A549 (cell line): ENCODE measurements at regions of chr11 and their contacts with region 1.

Region 1: DNA sequence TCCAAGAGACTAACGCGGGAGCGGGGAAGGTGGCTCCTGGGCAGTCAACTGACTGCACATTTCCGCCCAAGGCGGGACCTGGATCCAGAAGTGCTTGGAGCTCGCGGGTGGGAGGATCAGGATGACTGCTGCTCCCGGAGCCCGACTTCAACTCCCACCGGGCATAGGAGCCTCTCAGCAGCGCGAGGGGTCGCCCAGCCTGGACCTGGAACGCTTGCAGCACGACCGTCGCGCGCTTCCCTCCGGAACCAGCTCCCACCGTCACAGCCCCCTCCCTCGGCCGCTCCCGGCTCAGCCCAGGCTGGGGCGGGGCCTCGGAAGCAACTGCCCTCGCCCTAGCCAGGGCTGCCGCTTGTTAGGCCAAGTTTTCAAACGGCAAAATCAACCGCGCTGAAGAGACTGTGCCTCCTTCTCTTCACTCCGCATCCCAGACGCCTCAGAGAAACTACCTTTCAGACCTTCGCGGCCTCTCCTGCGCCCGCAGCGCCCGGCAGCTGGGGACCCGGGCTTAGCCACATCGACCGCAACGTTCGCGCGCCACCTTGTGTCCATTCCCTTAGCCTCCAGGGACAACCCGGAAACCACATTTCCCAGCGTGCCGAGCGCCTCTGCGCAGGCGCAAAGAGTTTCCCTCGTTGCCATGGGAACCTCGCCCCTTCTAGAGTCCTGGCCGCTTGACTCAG is 14.0 kb downstream of the SSH3 start:
- DNase-seq: peak; percentile 94 to 99
- ATAC-seq: peak; percentile 88 to 90
- H3K4me3 ChIP-seq: peak overlapping the region; percentile 69
- H3K27ac ChIP-seq: peak overlapping the region; percentile 91 to 95
- H3K4me1 ChIP-seq: peaks cover 12% of the 10 kb centered on the region
- CTCF ChIP-seq: peak; percentile 97
- EP300 ChIP-seq: no peak
- POLR2A ChIP-seq: peak; percentile 88
- RAD21 ChIP-seq: peak; percentile 92 to 98

Region 2: DNA sequence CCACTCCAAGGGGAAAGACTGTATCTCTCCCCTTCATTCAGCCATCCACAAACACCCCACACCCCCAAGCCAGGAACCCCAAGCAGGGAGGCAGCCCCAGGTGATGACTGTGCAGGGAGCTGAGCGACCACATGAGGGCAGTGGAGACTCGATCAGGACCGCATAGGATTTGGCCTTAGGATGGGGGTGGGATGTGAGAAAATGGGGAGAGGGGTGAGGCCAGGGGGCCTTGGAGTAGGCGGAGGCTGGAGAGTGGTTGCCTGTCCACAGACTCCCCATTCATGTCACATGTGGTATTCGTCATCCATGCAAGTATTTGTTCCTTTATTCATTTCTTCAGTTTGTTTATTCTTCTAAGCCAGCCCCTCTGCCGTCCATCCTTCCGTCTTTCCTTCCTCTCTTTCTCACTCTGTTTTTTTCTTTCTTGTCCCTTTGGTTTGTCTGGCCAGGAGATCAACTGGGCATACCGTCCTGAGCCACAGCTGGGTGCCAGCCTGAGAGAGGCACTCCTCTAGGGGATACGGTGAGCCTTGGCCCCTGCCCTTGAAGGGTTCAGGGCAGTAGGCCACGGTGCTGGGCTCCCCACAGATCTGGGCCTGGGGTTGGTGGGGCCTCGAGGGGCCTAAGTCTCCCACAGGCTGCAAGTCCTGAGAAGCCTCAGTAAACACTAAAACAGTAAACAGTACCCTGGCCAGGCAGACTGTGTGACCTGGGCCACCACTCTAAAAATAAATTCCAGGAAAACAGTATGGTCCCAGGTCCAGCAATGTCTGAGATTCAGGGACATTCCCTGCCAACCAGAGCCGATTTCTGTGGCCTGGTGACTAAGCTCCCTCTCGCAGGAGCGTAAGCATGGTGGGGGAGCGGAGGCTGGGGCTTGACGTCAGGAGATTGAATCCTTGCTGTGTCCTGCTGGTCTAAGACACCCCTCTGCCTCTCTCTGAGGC is 263.2 kb before region 1 on chr11:
- CTCF ChIA-PET with region 1: interaction called, 16 read pairs
- POLR2A ChIA-PET with region 1: interaction called, 3 read pairs
- DNase-seq: peak; percentile 80 to 98
- ATAC-seq: peak; percentile 64 to 82
- H3K4me3 ChIP-seq: no peak overlapping the region
- H3K27ac ChIP-seq: peak overlapping the region; percentile 75 to 91
- H3K4me1 ChIP-seq: peaks cover 44% of the 10 kb centered on the region
- CTCF ChIP-seq: peak; percentile 81
- EP300 ChIP-seq: no peak
- POLR2A ChIP-seq: no peak
- RAD21 ChIP-seq: peak; percentile 84 to 85

Region 3: DNA sequence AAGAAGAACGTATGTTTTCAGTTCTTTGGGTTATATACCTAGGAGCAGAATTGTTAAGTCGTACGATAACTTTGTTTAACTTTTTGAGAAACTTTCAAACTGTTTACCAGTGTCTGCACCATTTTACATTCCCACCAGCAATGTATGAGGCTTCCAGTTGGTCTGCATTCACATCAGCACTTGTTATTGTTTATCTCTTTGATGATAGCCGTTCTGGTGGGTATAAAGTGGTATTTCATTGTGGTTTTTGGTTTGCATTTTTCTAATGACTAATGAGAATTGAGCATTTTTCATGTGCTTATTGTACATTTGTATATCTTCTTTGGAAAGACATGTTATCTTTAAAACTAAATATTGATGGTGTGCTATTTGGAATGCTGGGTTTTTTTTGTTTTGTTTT is 138.5 kb before region 1 on chr11:
- CTCF ChIA-PET with region 1: no interaction called
- POLR2A ChIA-PET with region 1: no interaction called
- DNase-seq: no peak
- ATAC-seq: no peak
- H3K4me3 ChIP-seq: no peak overlapping the region
- H3K27ac ChIP-seq: no peak overlapping the region
- H3K4me1 ChIP-seq: peaks cover 9% of the 10 kb centered on the region; the same call in 2 of the 3 replicates
- CTCF ChIP-seq: no peak
- EP300 ChIP-seq: no peak
- POLR2A ChIP-seq: no peak
- RAD21 ChIP-seq: no peak

Region 4: DNA sequence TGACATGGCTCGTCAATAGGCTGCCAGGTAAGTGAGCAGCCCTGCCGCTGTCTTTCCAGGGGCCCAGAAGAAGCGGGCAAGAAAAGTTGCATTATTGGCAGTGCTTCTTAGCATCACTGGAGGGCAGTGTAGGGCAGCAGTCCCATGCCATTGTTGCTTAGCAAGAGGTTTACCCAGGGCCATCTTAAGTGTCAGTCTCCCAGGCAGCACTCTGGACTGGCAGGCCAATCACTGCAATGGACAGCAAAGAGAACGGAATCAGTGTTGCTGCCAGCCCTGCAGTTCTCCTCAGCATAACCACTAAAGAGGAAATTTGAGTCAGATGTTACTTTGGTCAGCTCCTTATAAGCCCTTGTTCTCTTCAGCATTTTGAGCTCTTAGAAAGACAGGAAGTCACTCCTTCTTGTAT is 64.5 kb before region 1 on chr11:
- CTCF ChIA-PET with region 1: interaction called, 22 read pairs
- POLR2A ChIA-PET with region 1: no interaction called
- DNase-seq: peak; percentile 49 to 80
- ATAC-seq: peak; percentile 75 to 82
- H3K4me3 ChIP-seq: no peak overlapping the region
- H3K27ac ChIP-seq: no peak overlapping the region
- H3K4me1 ChIP-seq: no peaks in the 10 kb centered on the region
- CTCF ChIP-seq: peak; percentile 40
- EP300 ChIP-seq: no peak
- POLR2A ChIP-seq: no peak
- RAD21 ChIP-seq: peak; percentile 37 to 50; a peak in 4 of 5 replicates

Region 5: DNA sequence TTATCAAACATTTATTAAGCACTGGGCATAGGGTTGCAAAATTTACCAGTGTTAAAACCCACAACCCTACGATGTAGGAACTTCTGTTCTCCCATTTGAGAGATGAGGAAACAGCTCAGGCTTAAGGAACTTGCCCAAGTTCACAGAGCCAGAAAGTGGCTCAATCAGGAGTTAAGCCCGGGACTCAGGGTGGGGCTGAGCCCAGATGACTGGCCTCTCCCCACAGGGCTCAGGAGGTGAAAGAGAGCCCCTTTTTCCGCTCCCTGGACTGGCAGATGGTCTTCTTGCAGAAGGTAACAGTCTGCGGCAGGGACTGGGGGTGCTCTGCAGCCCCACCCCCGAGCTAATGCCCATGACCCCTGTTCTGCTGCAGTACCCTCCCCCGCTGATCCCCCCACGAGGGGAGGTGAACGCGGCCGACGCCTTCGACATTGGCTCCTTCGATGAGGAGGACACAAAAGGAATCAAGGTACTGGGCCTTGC is 33.8 kb before region 1 on chr11:
- CTCF ChIA-PET with region 1: interaction called, 20 read pairs
- POLR2A ChIA-PET with region 1: interaction called, 4 read pairs
- DNase-seq: no peak
- ATAC-seq: no peak
- H3K4me3 ChIP-seq: no peak overlapping the region
- H3K27ac ChIP-seq: no peak overlapping the region
- H3K4me1 ChIP-seq: peaks cover 10% of the 10 kb centered on the region; the same call in 2 of the 3 replicates
- CTCF ChIP-seq: no peak
- EP300 ChIP-seq: no peak
- POLR2A ChIP-seq: no peak
- RAD21 ChIP-seq: no peak

Region 6: GRCh38 chr11:67332081-67332691 is 14.8 kb after region 1 on chr11:
- CTCF ChIA-PET with region 1: interaction called, 28 read pairs
- POLR2A ChIA-PET with region 1: interaction called, 4 read pairs
- DNase-seq: no peak
- ATAC-seq: no peak
- H3K4me3 ChIP-seq: no peak overlapping the region
- H3K27ac ChIP-seq: no peak overlapping the region
- H3K4me1 ChIP-seq: no peaks in the 10 kb centered on the region
- CTCF ChIP-seq: no peak
- EP300 ChIP-seq: no peak
- POLR2A ChIP-seq: no peak
- RAD21 ChIP-seq: no peak

Region 7: GRCh38 chr11:67353317-67354074 is 36.1 kb after region 1 on chr11 and contains the start of gene POLD4:
- CTCF ChIA-PET with region 1: interaction called, 31 read pairs
- POLR2A ChIA-PET with region 1: interaction called, 4 read pairs
- DNase-seq: peak; percentile 95 to 97
- ATAC-seq: peak; percentile 46 to 74
- H3K4me3 ChIP-seq: peak within 1 kb of the TSS; percentile 69
- H3K27ac ChIP-seq: peak within 1 kb of the TSS; percentile 93 to 98
- H3K4me1 ChIP-seq: peaks cover 87% of the 10 kb centered on the region
- CTCF ChIP-seq: no peak
- EP300 ChIP-seq: no peak
- POLR2A ChIP-seq: peak; percentile 30; the same call in 1 of the 2 replicates
- RAD21 ChIP-seq: no peak
- polyA plus RNA-seq, gene POLD4: 140 and 157 TPM in 2 replicates

Region 8: GRCh38 chr11:67470337-67471007 is 153.1 kb after region 1 on chr11:
- CTCF ChIA-PET with region 1: no interaction called
- POLR2A ChIA-PET with region 1: no interaction called
- DNase-seq: no peak
- ATAC-seq: no peak
- H3K4me3 ChIP-seq: no peak overlapping the region
- H3K27ac ChIP-seq: no peak overlapping the region
- H3K4me1 ChIP-seq: peaks cover 22% of the 10 kb centered on the region
- CTCF ChIP-seq: no peak
- EP300 ChIP-seq: no peak
- POLR2A ChIP-seq: no peak
- RAD21 ChIP-seq: no peak

Region 9: DNA sequence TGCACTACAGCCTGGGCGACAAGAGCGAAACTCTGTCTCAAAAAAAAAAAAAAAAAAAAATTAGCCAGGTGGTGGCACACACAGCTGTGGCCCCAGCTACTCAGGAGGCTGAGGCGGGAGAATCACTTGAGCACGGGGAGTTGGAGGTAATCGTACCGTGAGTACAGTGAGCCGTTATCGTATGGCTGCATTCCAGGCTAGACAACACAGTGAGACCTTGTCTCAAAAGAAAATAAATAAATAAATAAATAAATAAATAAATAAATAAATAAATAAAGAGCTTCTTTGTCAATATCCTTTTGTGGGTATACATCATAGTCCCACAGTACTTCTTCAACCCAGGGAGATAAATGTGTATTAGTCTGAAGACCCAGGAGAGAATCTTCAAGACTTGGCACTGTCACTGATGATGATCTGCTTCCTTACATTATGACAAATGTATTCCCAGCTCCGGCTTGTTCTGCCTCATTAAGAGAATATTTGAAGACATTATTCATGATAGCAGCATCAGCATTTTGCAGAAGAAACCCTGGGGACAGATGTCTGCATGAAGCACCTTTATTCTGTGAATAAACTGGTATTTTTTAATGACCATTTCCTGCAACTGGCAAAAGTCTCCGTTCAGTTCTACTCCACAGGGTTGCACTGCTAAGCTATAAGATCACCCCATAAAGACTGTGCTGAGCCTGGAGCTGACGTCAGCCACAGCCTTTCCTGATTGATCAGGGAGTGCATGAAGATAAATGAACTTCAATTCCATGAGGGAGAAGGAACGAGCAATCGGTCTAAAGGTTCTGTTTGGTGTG is 334.8 kb after region 1 on chr11:
- CTCF ChIA-PET with region 1: no interaction called
- POLR2A ChIA-PET with region 1: no interaction called
- DNase-seq: no peak
- ATAC-seq: no peak
- H3K4me3 ChIP-seq: no peak overlapping the region
- H3K27ac ChIP-seq: no peak overlapping the region
- H3K4me1 ChIP-seq: peaks cover 8% of the 10 kb centered on the region; the same call in 2 of the 3 replicates
- CTCF ChIP-seq: no peak
- EP300 ChIP-seq: no peak
- POLR2A ChIP-seq: no peak
- RAD21 ChIP-seq: no peak